Activated CD8-positive, alpha-beta T cell treated with anti-CD3 and anti-CD28 coated beads, Interleukin-2, amount 10 ng/mL, durations not matched to agents 7 days and 5 days (primary cell): ENCODE measurements at regions of chr19 and their contacts with region 1.

Region 1: DNA sequence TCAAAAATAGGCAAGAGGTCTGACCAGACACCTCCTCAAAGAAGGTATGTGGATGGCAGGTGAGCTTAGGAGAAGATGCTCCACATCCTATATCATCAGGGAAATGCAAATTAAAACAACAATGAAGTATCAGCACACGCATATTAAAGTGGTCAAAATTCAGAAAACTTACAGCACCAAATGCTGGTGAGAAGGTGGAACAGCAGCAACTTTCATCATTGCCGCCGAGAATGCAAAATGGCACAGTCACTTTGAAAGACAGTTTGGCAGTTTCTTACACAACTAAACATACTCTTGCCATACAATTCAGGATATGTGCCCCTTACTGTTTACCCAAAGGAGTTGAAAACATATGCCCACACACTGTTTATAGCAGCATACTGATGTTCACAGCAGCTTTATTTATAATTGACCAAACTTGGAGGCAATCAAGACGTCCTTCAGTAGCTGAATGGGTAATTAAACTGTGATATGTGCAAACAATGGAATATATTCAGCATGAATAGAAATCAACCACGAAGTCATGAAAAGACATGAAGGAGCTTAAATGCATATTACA is 22.5 kb downstream of the OR10H4 start:
- DNase-seq: no peak
- ATAC-seq: no peak
- H3K4me3 Mint-ChIP-seq: no peak overlapping the region
- H3K27ac Mint-ChIP-seq: no peak overlapping the region
- H3K4me1 Mint-ChIP-seq: no peaks in the 10 kb centered on the region
- H3K27me3 Mint-ChIP-seq: peaks cover 19% of the 10 kb centered on the region

Region 2: GRCh38 chr19:15629003-15629880 is 342.1 kb before region 1 on chr19:
- CTCF ChIA-PET with region 1: interaction called, 10 read pairs
- POLR2A ChIA-PET with region 1: no interaction called
- DNase-seq: peak; percentile 90
- ATAC-seq: peak; percentile 93
- H3K4me3 Mint-ChIP-seq: no peak overlapping the region
- H3K27ac Mint-ChIP-seq: no peak overlapping the region
- H3K4me1 Mint-ChIP-seq: peaks cover 6% of the 10 kb centered on the region
- H3K27me3 Mint-ChIP-seq: peaks cover 7% of the 10 kb centered on the region

Region 3: GRCh38 chr19:15850385-15850784 is 120.9 kb before region 1 on chr19:
- CTCF ChIA-PET with region 1: no interaction called
- POLR2A ChIA-PET with region 1: no interaction called
- DNase-seq: no peak
- ATAC-seq: no peak
- H3K4me3 Mint-ChIP-seq: no peak overlapping the region
- H3K27ac Mint-ChIP-seq: no peak overlapping the region
- H3K4me1 Mint-ChIP-seq: peaks cover 9% of the 10 kb centered on the region
- H3K27me3 Mint-ChIP-seq: peaks cover 4% of the 10 kb centered on the region

Region 4: DNA sequence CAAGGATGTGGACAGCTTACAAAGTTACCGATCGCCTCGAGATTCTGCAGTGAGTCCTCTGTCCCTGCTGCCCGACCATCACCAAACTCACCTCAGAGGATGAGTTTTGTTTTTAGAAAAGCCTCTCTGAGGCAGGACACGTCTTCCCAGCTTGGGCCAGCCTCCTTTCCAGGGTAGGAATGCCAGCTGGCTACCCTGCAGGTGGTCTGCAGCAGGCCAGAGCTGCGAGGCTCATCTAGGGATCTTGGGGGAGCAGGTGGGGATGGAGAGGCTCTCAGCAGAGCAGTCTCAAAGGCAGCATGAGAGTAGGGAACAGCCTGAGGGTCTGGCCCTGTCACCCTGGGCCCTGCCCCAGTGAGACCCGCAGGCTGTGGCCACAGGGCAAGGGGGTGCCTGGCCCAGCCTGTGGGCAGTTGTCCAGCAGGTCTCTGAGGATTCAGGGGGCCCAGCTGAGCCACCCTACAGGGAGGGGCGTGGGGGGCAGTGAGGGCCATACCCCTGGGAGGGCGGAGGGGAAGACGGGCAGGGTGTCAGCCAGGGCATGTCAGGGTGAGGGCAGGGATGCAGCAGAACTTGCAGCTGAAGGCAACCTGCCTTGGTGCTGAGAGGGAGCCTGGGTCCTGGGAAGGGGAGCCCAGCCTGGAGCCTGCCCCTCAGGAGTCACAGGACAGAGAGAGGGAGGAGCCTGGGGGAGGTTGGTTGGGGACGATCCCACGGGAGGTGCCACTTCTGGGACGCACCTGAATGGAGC is 47.7 kb after region 1 on chr19:
- CTCF ChIA-PET with region 1: no interaction called
- POLR2A ChIA-PET with region 1: no interaction called
- DNase-seq: no peak
- ATAC-seq: no peak
- H3K4me3 Mint-ChIP-seq: no peak overlapping the region
- H3K27ac Mint-ChIP-seq: no peak overlapping the region
- H3K4me1 Mint-ChIP-seq: no peaks in the 10 kb centered on the region
- H3K27me3 Mint-ChIP-seq: no peaks in the 10 kb centered on the region